ENCODE measurements at regions of chr7 and their contacts with region 1.

Region 1: DNA sequence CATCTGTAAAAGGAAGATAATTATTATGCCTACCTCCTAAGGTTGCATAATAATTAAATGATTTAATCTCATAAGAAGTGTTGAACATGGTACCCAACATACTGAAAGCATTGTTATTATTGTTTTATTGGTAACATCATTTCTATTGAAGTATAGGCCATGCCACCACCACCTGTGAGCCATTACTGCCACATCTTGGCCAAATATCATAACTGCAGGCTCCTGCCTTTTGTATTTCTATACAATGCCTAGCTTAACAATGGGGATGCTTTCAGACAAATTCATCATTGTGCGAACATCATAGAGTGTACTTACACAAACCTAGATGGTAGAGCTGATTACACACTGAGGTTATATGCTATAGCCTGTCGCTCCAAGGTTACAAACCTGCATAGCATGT is 61.1 kb upstream of the NPSR1 start:
- DNase-seq: no peak
- ATAC-seq: peak; percentile 46

Region 2: DNA sequence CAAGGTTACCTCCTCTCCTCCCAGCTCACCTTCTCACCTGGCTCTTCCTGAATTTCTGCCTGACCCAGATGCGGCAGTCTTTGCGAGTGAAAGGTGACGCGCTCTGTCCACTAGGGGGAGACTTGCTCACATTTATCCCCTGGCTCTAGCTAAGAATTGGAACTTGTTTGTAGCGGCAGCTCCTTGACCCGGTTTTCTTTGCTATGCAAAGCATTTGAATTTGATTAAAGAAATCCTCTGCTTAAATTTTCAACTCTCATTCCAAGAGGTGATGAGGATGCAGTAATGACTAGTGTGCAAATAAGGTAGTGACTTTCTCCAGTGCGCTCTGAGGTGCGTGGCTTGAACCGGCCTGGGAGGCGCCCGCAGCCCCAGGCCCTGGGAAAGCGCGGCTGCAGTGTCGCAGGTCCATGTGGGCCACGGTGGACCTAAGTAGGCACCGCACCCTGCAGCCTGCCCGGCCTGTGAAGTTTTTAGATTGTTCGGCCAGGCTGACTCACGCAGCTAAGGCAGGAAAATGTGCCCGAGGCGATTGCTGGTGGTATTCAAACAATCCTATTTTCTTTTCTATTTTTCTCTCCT is 275.8 kb before region 1 on chr7:
- intact Hi-C with region 1: loop called (anchors 5 kb)
- DNase-seq: peak; percentile 50
- ATAC-seq: peak; percentile 91